IMR-90 (cell line): ENCODE measurements at regions of chr15 and their contacts with region 1.

Region 1: DNA sequence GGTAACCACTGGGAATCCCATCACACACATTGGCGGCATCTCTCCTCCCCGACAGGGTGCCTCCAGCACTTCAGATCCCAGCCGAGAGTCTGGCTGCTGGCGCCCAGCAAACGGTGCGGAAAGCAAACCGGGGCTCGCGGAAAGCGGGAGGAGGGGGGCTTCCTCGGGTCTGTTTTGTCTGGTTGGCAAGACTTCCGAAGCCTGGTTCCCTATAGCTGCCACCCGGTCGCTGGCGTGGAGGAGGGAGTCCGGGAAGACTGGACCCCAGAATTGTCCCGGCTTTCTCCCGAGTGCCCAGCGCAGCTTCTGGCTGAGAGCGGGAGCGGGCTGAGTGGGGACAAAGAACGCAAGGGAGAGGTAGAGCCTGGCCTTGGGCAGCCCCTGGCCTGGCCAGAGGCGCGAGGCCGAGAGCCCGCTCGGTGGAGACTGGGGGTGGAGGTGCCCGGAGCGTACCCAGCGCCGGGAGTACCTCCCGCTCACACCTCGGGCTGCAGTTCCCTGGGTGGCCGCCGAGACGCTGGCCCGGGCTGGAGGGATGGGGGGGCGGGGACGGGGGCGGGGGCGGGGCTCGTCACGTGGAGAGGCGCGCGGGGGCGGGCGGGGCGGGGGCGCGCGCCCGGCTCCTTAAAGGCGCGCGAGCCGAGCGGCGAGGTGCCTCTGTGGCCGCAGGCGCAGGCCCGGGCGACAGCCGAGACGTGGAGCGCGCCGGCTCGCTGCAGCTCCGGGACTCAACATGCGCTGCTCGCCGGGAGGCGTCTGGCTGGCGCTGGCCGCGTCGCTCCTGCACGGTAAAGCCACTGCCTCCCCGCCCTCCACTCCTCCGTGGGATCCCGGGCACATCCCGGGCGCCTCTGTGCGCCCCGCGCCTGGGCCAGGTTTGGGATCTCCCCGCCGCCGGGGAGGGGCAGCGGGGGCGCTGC is at the start of gene CHRNA7:
- DNase-seq: peak; percentile 3
- ATAC-seq: peak; percentile 93
- H3K4me3 ChIP-seq: peak within 1 kb of the TSS; percentile 45
- H3K27ac ChIP-seq: no peak within 1 kb of the TSS
- H3K4me1 ChIP-seq: no peaks in the 10 kb centered on the region
- H3K27me3 ChIP-seq: peaks cover 29% of the 10 kb centered on the region
- CTCF ChIP-seq: 0 out of 2 replicates have a peak, but pooled peaks have one; percentile 3
- POLR2A ChIP-seq: no peak
- RAD21 ChIP-seq: no peak
- total RNA-seq, gene CHRNA7: not detected in 2 replicates

Region 2: DNA sequence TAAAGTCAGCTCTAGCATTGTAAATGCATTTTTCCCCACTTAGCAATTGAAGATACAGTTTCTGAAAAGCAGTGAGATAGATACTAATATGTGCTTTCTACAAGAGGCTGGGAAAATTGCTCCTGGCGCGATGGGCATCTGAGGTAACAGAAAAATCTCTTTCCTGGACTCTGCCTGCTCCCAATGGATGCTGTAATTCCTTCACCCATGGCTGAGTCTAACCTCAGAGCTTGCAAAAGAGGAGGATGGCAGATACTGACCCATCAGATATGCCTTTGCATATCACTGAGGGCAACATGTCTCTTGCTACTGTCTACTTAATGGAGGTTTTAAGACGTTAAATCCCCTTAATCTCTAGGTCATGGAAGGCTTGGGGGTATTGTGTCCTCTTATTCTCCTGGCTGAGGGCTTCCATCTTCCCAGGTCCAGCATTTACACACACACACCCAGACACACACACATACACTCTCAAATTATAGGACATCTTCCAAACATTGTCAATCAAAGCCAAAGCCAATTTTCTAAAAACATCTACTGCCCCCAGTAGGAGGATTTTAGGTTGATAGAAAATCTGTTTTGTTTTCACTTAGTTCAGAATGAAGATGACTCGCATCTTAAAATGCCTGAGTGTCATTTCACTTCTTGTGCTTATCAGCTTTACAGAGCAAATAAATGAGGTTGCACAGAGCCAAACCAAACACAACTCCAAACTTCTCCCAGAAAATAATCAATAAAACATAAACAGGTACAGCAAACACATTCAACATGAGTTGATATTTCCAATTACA is 931.0 kb before region 1 on chr15:
- CTCF ChIA-PET with region 1: no interaction called
- POLR2A ChIA-PET with region 1: no interaction called
- dilution Hi-C with region 1: no loop called
- in situ Hi-C with region 1: no loop called
- intact Hi-C with region 1: no loop called
- DNase-seq: no peak
- ATAC-seq: no peak
- H3K4me3 ChIP-seq: no peak overlapping the region
- H3K27ac ChIP-seq: no peak overlapping the region
- H3K4me1 ChIP-seq: no peaks in the 10 kb centered on the region
- H3K27me3 ChIP-seq: peaks cover 24% of the 10 kb centered on the region
- CTCF ChIP-seq: no peak
- POLR2A ChIP-seq: no peak
- RAD21 ChIP-seq: no peak

Region 3: GRCh38 chr15:31993062-31993461 is 37.1 kb before region 1 on chr15:
- CTCF ChIA-PET with region 1: no interaction called
- POLR2A ChIA-PET with region 1: no interaction called
- dilution Hi-C with region 1: no loop called
- in situ Hi-C with region 1: no loop called
- intact Hi-C with region 1: loop called (anchors 1 kb)
- DNase-seq: no peak
- ATAC-seq: no peak
- H3K4me3 ChIP-seq: no peak overlapping the region
- H3K27ac ChIP-seq: no peak overlapping the region
- H3K4me1 ChIP-seq: no peaks in the 10 kb centered on the region
- H3K27me3 ChIP-seq: no peaks in the 10 kb centered on the region
- CTCF ChIP-seq: no peak
- POLR2A ChIP-seq: no peak
- RAD21 ChIP-seq: no peak

Region 4: DNA sequence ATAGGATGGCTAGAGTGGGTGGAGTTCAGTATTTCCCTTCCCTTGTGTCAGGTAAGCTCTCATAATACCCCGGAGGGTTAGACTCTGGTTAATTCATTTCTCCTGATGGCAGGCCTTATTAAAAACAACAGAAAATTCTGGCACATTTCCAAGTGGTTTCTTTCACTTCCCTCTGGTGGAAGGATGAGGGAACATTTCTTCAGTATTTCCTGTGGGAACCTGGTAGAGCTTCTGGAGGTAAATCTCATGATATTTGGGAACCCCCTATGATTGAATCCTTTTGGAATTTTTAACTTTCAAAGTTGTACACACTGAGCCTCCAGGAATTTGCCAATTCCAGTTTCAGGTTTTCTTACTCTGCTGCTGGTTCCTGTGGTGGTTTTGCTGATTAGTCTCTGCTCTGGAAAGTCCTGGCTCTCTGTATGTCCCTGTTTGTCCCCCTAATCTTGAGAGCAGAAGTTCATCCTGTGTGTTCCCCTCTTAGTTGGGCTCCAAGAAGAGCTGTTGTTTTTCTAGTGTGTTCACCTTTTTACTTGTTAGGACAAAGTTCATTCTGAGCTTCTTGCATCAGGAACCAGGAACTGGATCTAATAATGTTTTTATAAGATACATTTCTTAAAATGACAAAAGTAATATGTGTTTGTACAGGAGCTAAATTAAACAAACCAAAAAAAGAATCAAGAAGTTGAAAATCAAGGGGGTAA is 12.3 kb after region 1 on chr15:
- CTCF ChIA-PET with region 1: no interaction called
- POLR2A ChIA-PET with region 1: no interaction called
- dilution Hi-C with region 1: no loop called
- in situ Hi-C with region 1: no loop called
- intact Hi-C with region 1: no loop called
- DNase-seq: no peak
- ATAC-seq: no peak
- H3K4me3 ChIP-seq: no peak overlapping the region
- H3K27ac ChIP-seq: no peak overlapping the region
- H3K4me1 ChIP-seq: no peaks in the 10 kb centered on the region
- H3K27me3 ChIP-seq: no peaks in the 10 kb centered on the region
- CTCF ChIP-seq: no peak
- POLR2A ChIP-seq: no peak
- RAD21 ChIP-seq: no peak